ENCODE measurements at regions of chr3 and their contacts with region 1.

Region 1: DNA sequence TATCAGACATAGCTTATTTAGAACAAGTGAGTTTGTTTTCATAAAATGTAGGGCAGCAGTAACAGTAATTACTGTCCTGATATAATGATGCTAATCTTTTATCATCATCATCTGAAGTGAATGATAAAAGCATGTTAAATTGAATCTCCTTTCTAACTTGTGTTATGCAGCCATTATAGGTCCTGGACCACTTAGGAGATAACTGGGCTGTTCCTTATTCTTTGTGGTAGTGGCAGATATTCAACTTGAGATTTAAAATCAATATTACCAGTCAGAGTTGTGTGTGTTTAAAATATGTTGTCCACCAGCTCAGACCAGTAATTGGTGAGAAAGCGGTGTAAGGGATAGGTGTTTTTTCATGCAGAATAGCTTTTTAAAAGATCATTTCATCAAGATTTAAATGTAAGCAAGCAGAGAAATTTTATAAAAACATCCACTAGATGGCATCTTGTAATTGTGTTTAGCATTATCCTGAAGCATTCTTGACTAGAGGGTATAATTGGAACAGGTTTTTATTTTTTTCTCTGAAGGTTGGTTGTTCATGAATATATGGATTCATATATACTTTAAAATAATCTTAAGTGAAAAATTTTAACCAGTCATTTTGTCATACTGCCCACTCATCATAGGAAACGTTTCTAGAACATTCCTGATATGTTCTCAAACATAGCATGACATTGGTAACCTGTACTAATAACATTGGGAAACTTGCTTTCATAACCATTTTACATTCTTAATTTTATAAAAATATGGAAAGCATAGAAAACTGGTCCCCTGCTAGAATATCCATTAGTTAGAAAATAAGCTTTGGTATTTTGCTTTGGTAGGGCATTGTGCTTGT is 153.9 kb downstream of the BBX start:
- DNase-seq: no peak
- ATAC-seq: no peak

Region 2: GRCh38 chr3:107740992-107741896 is 64.6 kb after region 1 on chr3:
- intact Hi-C with region 1: loop called (anchors 1 kb)
- DNase-seq: no peak
- ATAC-seq: no peak

Region 3: GRCh38 chr3:107927361-107928083 is 250.8 kb after region 1 on chr3:
- intact Hi-C with region 1: loop called (anchors 10 kb)
- DNase-seq: peak; percentile 86
- ATAC-seq: peak; percentile 96

Measured in Right ventricle myocardium inferior (tissue), 1 donor.